ENCODE measurements at regions of chr7 and their contacts with region 1.

Region 1: DNA sequence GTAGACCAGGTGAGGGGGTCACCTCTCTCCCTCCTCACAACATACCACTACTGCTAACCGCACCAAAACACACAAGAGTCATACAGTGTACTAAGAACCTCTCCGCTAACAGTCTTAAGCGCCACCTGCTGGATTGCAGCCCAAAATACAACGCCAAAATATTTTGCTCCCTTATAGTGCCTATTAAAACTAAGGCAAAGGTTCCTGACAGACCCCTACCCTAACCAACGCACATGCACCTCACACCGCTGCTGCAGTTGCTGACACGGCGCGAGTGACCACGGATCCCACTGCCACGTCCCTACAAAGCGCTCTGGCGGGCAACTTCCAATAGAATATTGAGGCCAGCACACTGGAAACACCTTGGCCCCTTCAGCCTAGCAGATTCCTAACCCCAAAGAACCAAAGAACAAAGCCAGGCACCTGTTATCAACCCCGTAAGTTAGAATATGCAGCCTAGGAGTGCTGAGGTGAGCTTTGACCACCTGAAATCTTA is 563.6 kb upstream of the SEMA3D start:
- DNase-seq: peak; percentile 39
- ATAC-seq: peak; percentile 87
- H3K4me3 ChIP-seq: no peak overlapping the region
- H3K27ac ChIP-seq: no peak overlapping the region
- H3K4me1 ChIP-seq: no peaks in the 10 kb centered on the region
- H3K27me3 ChIP-seq: no peaks in the 10 kb centered on the region
- CTCF ChIP-seq: peak; percentile 80

Region 2: GRCh38 chr7:85554236-85555178 is 196.0 kb before region 1 on chr7:
- CTCF ChIA-PET with region 1: no interaction called
- POLR2A ChIA-PET with region 1: no interaction called
- in situ Hi-C with region 1: no loop called
- intact Hi-C with region 1: loop called (anchors 10 kb)
- DNase-seq: peak; percentile 50
- ATAC-seq: peak; percentile 62; the same call in 1 of the 2 replicates
- H3K4me3 ChIP-seq: no peak overlapping the region
- H3K27ac ChIP-seq: no peak overlapping the region
- H3K4me1 ChIP-seq: no peaks in the 10 kb centered on the region
- H3K27me3 ChIP-seq: no peaks in the 10 kb centered on the region
- CTCF ChIP-seq: peak; percentile 69; the same call in 1 of the 2 replicates